Kidney (tissue), 22 donors: ENCODE measurements at regions of chr5 and their contacts with region 1.

Region 1: DNA sequence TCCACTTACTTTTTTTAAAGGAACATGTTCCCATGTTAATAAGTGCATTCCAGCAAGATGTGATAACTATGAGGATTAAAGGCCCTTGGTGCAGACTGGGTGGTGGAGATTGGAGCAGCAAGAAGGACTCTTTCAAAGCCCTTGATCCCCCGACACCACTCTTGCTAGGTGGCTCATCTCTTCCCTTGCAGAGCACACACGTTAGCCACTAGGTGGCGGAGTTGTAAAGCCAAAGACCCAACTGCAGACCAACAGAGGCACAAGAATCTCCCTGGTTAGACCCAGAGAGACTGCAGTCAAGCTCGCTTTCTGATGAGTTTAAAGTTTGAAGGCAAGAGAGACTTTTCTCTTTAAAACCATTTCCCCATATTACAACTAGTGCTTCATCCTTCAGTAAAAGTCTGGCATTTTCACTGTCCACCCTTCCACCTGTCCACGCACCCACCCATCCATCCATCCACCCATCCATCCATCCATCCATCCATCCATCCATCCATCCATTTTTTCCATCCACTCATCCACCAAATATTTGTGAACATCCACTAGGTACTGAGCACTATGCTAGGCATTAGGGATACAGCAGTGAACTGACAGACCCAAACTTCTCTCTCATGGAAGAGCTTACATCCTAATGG is 226.9 kb downstream of the MSX2 start:
- DNase-seq: peak in 4 of 5 donors; percentile 78 to 93 (median 86)
- H3K4me3 ChIP-seq: no peak overlapping the region
- H3K27ac ChIP-seq: no peak overlapping the region
- H3K4me1 ChIP-seq: no peaks in the 10 kb centered on the region
- H3K27me3 ChIP-seq: no peaks in the 10 kb centered on the region
- CTCF ChIP-seq: peak; percentile 91

Region 2: GRCh38 chr5:175444060-175444904 is 493.0 kb after region 1 on chr5 and contains the start of gene DRD1:
- intact Hi-C with region 1: loop called (anchors 5 kb)
- DNase-seq: peak; percentile 39 to 76 (median 55)
- H3K4me3 ChIP-seq: peak within 1 kb of the TSS in 1 of 3 donors; percentile 29
- H3K27ac ChIP-seq: no peak within 1 kb of the TSS
- H3K4me1 ChIP-seq: peaks cover 0 to 3% (median 0%) of the 10 kb centered on the region in 3 donors
- H3K27me3 ChIP-seq: peaks cover 17% of the 10 kb centered on the region
- CTCF ChIP-seq: peak; percentile 64
- total RNA-seq, gene DRD1: 0.25 TPM